ENCODE measurements at regions of chr7 and their contacts with region 1.

Region 1: DNA sequence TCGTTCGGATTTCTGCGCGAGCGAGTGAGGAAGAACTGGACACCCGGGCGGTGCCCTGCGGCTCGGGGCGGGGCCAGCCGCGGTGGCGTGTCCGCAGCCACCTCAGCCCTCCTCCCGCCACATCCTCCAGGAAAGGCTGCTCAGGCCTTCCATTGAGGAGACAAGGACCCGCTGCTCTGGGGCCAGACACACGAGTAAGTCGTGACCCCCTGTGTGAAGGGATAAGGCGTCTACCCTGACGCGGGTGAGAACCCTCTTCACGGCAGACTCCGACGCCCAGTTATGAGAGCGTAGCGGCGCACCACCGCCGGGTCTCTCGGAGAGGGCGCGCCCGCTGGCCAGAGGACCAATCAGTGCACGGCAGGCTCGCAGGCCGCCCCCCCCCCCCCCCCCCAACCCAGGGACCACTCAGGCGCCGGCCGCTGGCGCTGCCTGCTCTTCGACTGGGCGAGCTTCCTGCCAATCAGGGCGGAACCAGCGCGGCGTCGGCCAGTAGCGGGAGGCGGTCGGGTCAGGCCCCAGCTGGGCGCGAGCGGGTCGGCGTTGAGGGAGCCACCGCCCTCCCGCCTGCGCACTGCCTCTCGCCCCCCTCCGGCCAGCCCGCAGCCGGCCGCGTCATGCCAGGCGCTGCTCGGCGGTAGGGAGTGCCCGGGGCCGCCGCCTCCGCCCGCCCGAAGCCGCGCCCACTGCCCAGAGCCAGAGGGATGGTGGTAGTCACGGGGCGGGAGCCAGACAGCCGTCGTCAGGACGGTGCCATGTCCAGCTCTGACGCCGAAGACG is at the start of gene KCTD7:
- DNase-seq: peak; percentile 97
- ATAC-seq: peak; percentile 85
- H3K4me3 ChIP-seq: peak within 1 kb of the TSS; percentile 82 to 97 (median 88)
- H3K4me3 Mint-ChIP-seq: peak within 1 kb of the TSS; percentile 96
- H3K27ac ChIP-seq: peak within 1 kb of the TSS; percentile 89 to 91
- H3K27ac Mint-ChIP-seq: peak within 1 kb of the TSS; percentile 95
- H3K4me1 ChIP-seq: peaks cover 42 to 48% of the 10 kb centered on the region in 2 donors
- H3K4me1 Mint-ChIP-seq: peaks cover 50% of the 10 kb centered on the region
- H3K27me3 ChIP-seq: no peaks in the 10 kb centered on the region
- H3K27me3 Mint-ChIP-seq: no peaks in the 10 kb centered on the region
- CTCF ChIP-seq: no peak
- total RNA-seq, gene KCTD7: 40.2 and 44.4 TPM in 2 replicates

Region 2: GRCh38 chr7:66474441-66474840 is 154.1 kb before region 1 on chr7:
- CTCF ChIA-PET with region 1: no interaction called
- POLR2A ChIA-PET with region 1: no interaction called
- intact Hi-C with region 1: no loop called
- DNase-seq: no peak
- ATAC-seq: no peak
- H3K4me3 ChIP-seq: no peak overlapping the region
- H3K4me3 Mint-ChIP-seq: no peak overlapping the region
- H3K27ac ChIP-seq: no peak overlapping the region
- H3K27ac Mint-ChIP-seq: no peak overlapping the region
- H3K4me1 ChIP-seq: no peaks in the 10 kb centered on the region
- H3K4me1 Mint-ChIP-seq: no peaks in the 10 kb centered on the region
- H3K27me3 ChIP-seq: no peaks in the 10 kb centered on the region
- H3K27me3 Mint-ChIP-seq: no peaks in the 10 kb centered on the region
- CTCF ChIP-seq: no peak

Region 3: GRCh38 chr7:66591799-66592596 is 36.6 kb before region 1 on chr7:
- CTCF ChIA-PET with region 1: no interaction called
- POLR2A ChIA-PET with region 1: no interaction called
- intact Hi-C with region 1: loop called (anchors 1 kb)
- DNase-seq: peak; percentile 90
- ATAC-seq: peak; percentile 98
- H3K4me3 ChIP-seq: peak overlapping the region; percentile 47 to 94 (median 81)
- H3K4me3 Mint-ChIP-seq: peak overlapping the region; percentile 100
- H3K27ac ChIP-seq: peak overlapping the region; percentile 42 to 87
- H3K27ac Mint-ChIP-seq: peak overlapping the region; percentile 99
- H3K4me1 ChIP-seq: peaks cover 13 to 27% of the 10 kb centered on the region in 2 donors
- H3K4me1 Mint-ChIP-seq: peaks cover 47% of the 10 kb centered on the region
- H3K27me3 ChIP-seq: no peaks in the 10 kb centered on the region
- H3K27me3 Mint-ChIP-seq: no peaks in the 10 kb centered on the region
- CTCF ChIP-seq: no peak

Region 4: GRCh38 chr7:66609176-66609575 is 19.4 kb before region 1 on chr7:
- CTCF ChIA-PET with region 1: no interaction called
- POLR2A ChIA-PET with region 1: no interaction called
- intact Hi-C with region 1: no loop called
- DNase-seq: no peak
- ATAC-seq: no peak
- H3K4me3 ChIP-seq: no peak overlapping the region
- H3K4me3 Mint-ChIP-seq: no peak overlapping the region
- H3K27ac ChIP-seq: no peak overlapping the region
- H3K27ac Mint-ChIP-seq: no peak overlapping the region
- H3K4me1 ChIP-seq: no peaks in the 10 kb centered on the region
- H3K4me1 Mint-ChIP-seq: no peaks in the 10 kb centered on the region
- H3K27me3 ChIP-seq: no peaks in the 10 kb centered on the region
- H3K27me3 Mint-ChIP-seq: no peaks in the 10 kb centered on the region
- CTCF ChIP-seq: no peak

Region 5: DNA sequence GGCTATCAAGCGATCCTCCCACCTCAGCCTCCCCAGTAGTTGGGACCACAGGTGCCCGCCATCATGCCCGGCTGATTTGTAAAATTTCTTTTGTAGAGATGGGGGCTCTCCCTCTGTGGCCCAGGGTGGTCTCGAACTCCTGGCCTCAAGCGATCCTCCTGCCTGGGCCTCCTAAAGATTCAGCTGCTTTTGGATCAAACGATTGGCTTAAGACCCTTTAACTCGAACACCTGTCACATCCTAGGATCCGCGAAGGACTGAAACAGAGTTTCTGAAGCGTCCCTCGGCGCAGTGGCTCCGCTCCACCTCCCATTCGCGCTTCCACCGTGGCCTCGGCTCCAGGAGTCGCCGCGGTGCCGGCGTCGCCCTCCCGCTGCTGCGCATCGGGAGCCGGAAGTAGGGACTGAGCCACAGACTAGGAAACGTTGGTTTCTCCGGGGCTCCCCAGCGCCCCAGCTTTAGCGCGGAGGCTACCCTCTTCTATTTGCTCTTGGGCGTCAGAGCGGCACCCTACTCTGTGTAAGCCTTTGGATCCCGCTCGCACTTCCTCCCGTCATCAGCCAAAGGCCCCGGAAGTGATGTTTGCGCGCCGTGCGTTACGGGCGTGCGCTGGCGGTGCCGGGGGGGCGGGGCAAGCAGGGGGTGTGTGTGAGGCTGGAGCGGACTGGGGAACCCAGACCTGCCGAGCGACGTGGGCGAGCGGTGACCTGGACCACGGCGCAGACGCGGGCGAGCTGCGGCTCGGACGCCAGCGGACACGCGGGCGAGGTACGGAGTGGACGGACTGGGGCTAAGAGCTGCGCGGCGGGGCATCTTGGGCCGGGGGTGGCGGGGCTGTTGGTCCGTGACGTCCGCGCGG is 53.2 kb after region 1 on chr7:
- CTCF ChIA-PET with region 1: no interaction called
- POLR2A ChIA-PET with region 1: interaction called, 7 read pairs
- intact Hi-C with region 1: loop called (anchors 1 kb)
- DNase-seq: peak; percentile 97
- ATAC-seq: peak; percentile 95
- H3K4me3 ChIP-seq: peak overlapping the region; percentile 62 to 99 (median 82)
- H3K4me3 Mint-ChIP-seq: peak overlapping the region; percentile 96
- H3K27ac ChIP-seq: peak overlapping the region; percentile 95 to 99
- H3K27ac Mint-ChIP-seq: peak overlapping the region; percentile 97
- H3K4me1 ChIP-seq: peaks cover 21 to 39% of the 10 kb centered on the region in 2 donors
- H3K4me1 Mint-ChIP-seq: peaks cover 35% of the 10 kb centered on the region
- H3K27me3 ChIP-seq: no peaks in the 10 kb centered on the region
- H3K27me3 Mint-ChIP-seq: no peaks in the 10 kb centered on the region
- CTCF ChIP-seq: no peak

Region 6: DNA sequence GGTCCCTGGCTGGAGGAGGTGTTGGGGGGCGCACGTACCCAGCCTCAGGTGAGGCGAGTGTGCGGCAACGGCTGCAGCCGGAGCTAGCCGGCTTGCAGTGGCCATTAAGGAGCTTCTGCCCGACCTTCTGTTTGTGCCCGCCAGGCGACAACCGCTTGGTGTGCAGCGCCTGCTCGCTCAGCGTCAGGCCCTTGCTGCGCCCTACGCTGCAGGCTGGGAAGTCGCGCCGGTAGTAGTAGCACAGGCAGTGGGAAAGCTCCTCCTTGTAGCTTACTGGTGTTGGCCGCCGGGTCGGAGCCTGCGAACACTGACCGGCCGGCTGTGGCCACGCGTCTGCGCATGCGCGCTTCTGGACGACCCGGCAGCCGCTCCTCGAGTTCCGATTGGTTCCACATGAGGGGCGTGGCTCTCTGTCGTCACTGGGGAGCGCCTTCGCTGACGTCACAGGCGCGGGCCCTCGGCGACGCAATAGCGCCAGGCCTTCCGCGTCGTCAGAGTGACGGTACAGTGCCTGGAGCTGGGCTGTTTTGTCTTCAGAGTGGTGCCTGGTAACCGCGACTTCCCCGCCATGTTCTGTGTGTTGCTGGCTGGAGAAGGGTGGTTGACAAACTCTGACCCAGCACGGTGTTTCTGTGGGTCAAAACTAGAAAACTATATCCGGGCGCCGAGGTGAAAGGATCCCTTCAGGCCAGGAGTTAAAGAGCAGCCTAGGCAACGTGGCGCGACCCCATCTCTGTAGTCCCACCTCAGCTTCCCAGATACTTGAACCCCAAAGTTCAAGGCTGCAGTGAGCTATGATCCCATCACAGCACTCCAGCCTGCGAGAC is 216.2 kb after region 1 on chr7:
- CTCF ChIA-PET with region 1: no interaction called
- POLR2A ChIA-PET with region 1: interaction called, 4 read pairs
- intact Hi-C with region 1: loop called (anchors 2 kb)
- DNase-seq: peak; percentile 100
- ATAC-seq: peak; percentile 91
- H3K4me3 ChIP-seq: peak overlapping the region; percentile 72 to 93 (median 89)
- H3K4me3 Mint-ChIP-seq: peak overlapping the region; percentile 95
- H3K27ac ChIP-seq: peak overlapping the region; percentile 89 to 100
- H3K27ac Mint-ChIP-seq: peak overlapping the region; percentile 100
- H3K4me1 ChIP-seq: peaks cover 13 to 16% of the 10 kb centered on the region in 2 donors
- H3K4me1 Mint-ChIP-seq: peaks cover 23% of the 10 kb centered on the region
- H3K27me3 ChIP-seq: no peaks in the 10 kb centered on the region
- H3K27me3 Mint-ChIP-seq: no peaks in the 10 kb centered on the region
- CTCF ChIP-seq: peak; percentile 60

Measured in B cell (primary cell).